ENCODE measurements at regions of chr19 and their contacts with region 1.

Region 1: DNA sequence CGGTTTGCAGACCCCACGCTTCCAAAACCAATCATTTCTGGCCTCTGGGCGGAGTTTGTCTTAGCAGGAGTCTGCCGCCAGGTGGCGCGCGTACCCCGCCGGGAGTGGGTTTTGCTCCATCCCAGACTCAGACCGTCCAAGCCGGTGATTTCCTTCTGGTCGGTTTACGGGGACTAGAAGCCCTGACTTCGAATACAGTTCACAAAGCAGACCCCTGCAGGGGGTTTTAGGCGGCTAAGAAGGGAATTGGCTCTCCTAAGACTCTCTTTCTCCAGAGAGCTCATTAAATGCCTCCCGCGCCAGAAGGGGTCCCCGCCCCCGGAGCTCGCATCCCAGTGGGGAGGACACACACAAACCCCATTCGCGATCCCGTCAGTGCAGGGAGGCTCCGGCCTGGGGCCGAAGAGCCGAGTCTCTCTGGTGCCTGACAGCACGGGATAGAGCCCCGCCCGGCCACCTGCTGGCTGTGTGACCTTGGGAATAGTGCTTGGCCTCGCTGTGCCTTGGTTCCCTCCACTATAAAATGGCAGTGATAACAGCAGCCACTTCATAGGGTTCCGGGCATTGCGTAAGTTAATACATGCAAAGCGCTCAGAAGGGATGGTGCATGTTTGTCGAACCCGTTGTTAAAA is 8.6 kb upstream of the NUP62 start:
- DNase-seq: peak; percentile 58 to 89 (median 80)
- ATAC-seq: peak; percentile 67
- H3K4me3 ChIP-seq: peak overlapping the region in 1 of 2 experiments; percentile 21
- H3K4me3 Mint-ChIP-seq: no peak overlapping the region
- H3K27ac ChIP-seq: no peak overlapping the region
- H3K27ac Mint-ChIP-seq: no peak overlapping the region
- H3K4me1 ChIP-seq: peaks cover 22% of the 10 kb centered on the region
- H3K4me1 Mint-ChIP-seq: peaks cover 19% of the 10 kb centered on the region
- H3K27me3 ChIP-seq: no peaks in the 10 kb centered on the region
- H3K27me3 Mint-ChIP-seq: no peaks in the 10 kb centered on the region
- CTCF ChIP-seq: peak; percentile 90

Region 2: GRCh38 chr19:49954079-49954829 is 16.4 kb after region 1 on chr19:
- CTCF ChIA-PET with region 1: interaction called, 27 read pairs
- POLR2A ChIA-PET with region 1: no interaction called
- intact Hi-C with region 1: no loop called
- DNase-seq: no peak
- ATAC-seq: no peak
- H3K4me3 ChIP-seq: no peak overlapping the region
- H3K4me3 Mint-ChIP-seq: no peak overlapping the region
- H3K27ac ChIP-seq: no peak overlapping the region
- H3K27ac Mint-ChIP-seq: no peak overlapping the region
- H3K4me1 ChIP-seq: no peaks in the 10 kb centered on the region
- H3K4me1 Mint-ChIP-seq: no peaks in the 10 kb centered on the region
- H3K27me3 ChIP-seq: peaks cover 0 to 4% of the 10 kb centered on the region in 2 experiments
- H3K27me3 Mint-ChIP-seq: peaks cover 25% of the 10 kb centered on the region
- CTCF ChIP-seq: no peak

Region 3: DNA sequence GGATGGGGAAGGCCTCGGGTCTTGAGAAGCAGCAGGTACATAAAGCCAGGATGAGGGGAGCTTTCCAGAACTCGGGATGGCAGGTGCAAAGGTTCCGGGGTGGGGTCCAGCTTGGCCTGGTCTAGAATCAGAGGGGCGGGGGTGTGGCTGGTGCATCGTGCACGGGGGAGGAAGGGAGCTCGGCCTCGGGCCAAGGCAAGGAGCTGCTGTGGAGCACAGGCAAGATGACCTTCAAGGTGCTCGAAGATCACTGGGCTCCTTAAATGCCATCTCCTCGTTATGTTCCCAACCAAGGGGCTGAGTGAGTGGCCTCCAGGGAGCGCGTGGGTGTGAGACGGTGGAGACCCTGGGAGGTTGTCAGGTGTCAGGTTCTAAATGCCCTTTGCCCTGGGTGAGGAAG is 39.2 kb after region 1 on chr19:
- CTCF ChIA-PET with region 1: interaction called, 16 read pairs
- POLR2A ChIA-PET with region 1: no interaction called
- intact Hi-C with region 1: no loop called
- DNase-seq: no peak
- ATAC-seq: no peak
- H3K4me3 ChIP-seq: no peak overlapping the region
- H3K4me3 Mint-ChIP-seq: no peak overlapping the region
- H3K27ac ChIP-seq: no peak overlapping the region
- H3K27ac Mint-ChIP-seq: no peak overlapping the region
- H3K4me1 ChIP-seq: no peaks in the 10 kb centered on the region
- H3K4me1 Mint-ChIP-seq: no peaks in the 10 kb centered on the region
- H3K27me3 ChIP-seq: no peaks in the 10 kb centered on the region
- H3K27me3 Mint-ChIP-seq: no peaks in the 10 kb centered on the region
- CTCF ChIP-seq: no peak

Region 4: GRCh38 chr19:49983645-49984229 is 45.9 kb after region 1 on chr19:
- CTCF ChIA-PET with region 1: interaction called, 47 read pairs
- POLR2A ChIA-PET with region 1: no interaction called
- intact Hi-C with region 1: loop called (anchors 1 kb)
- DNase-seq: peak; percentile 57 to 85 (median 77)
- ATAC-seq: peak; percentile 67
- H3K4me3 ChIP-seq: no peak overlapping the region
- H3K4me3 Mint-ChIP-seq: no peak overlapping the region
- H3K27ac ChIP-seq: no peak overlapping the region
- H3K27ac Mint-ChIP-seq: no peak overlapping the region
- H3K4me1 ChIP-seq: no peaks in the 10 kb centered on the region
- H3K4me1 Mint-ChIP-seq: no peaks in the 10 kb centered on the region
- H3K27me3 ChIP-seq: no peaks in the 10 kb centered on the region
- H3K27me3 Mint-ChIP-seq: no peaks in the 10 kb centered on the region
- CTCF ChIP-seq: peak; percentile 81

Measured in CD8-positive, alpha-beta T cell (primary cell).